GM12878 (cell line): ENCODE measurements at regions of chr17 and their contacts with region 1.

Region 1: GRCh38 chr17:781805-782731 is at the starts of genes GLOD4 and MRM3:
- DNase-seq: peak; percentile 72
- ATAC-seq: peak; percentile 96
- H3K4me3 ChIP-seq: peak within 1 kb of the TSS; percentile 89
- H3K27ac ChIP-seq: peak within 1 kb of the TSS; percentile 72
- H3K4me1 ChIP-seq: peaks cover 10% of the 10 kb centered on the region
- H3K27me3 ChIP-seq: no peaks in the 10 kb centered on the region
- CTCF ChIP-seq: peak in 2 of 3 experiments; percentile 11 to 16; a peak in 1 of 6 replicates
- EP300 ChIP-seq: peak in 1 of 2 experiments; percentile 38; a peak in 1 of 4 replicates
- POLR2A ChIP-seq: peak; percentile 98
- RAD21 ChIP-seq: no peak
- polyA plus RNA-seq, gene GLOD4: 83.4 to 107 TPM
- polyA plus RNA-seq, gene MRM3: 2.3 to 6.0 TPM

Region 2: GRCh38 chr17:732067-732901 is 49.8 kb before region 1 on chr17 and contains the start of gene TLCD3A:
- CTCF ChIA-PET with region 1: no interaction called
- POLR2A ChIA-PET with region 1: interaction called, 3 read pairs
- RAD21 ChIA-PET with region 1: no interaction called
- SMC1A ChIA-PET with region 1: interaction called, 3 read pairs
- in situ Hi-C with region 1: no loop called
- intact Hi-C with region 1: loop called (anchors 5 kb)
- DNase-seq: no peak
- ATAC-seq: peak; percentile 70
- H3K4me3 ChIP-seq: peak within 1 kb of the TSS; percentile 83
- H3K27ac ChIP-seq: peak within 1 kb of the TSS; percentile 59
- H3K4me1 ChIP-seq: peaks cover 7% of the 10 kb centered on the region
- H3K27me3 ChIP-seq: no peaks in the 10 kb centered on the region
- CTCF ChIP-seq: no peak
- EP300 ChIP-seq: no peak
- POLR2A ChIP-seq: peak; percentile 58
- RAD21 ChIP-seq: no peak
- polyA plus RNA-seq, gene TLCD3A: 2.9 to 6.2 TPM